ENCODE measurements at regions of chr20 and their contacts with region 1.

Region 1: DNA sequence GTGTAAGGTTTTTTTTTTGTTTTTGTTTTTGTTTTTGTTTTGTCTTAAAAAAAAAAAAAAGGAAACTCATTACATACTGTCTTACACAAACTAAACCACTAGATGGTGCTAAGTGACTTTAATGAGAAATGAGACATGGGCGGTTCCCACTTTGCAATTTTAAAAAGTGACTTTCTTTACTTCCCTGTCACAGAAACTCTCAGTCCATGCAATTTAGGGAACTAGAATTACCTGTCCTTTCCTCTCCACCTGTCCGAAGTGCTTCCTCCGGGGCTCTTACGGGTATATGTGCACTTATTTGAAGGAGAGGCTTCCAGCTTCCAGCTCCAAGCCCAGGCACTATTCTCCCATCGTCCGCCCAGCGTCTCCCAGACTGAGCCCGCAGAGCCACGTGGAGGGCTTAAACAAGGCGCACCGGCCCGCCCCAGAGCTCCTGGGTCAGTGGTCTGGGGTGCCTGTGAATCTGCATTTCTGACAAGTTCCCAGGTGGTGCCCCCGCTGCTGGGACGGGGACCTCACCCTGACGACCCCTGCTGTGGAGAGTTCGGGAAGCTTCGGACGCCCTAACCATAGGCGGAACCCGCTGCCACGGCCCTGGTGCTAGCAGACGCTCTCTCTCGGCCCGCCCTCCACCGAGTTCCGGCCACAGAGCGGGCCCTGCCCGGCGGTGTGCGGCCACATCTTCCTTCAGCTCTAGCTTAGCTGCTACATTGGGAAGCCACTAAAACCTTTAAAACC is 26.1 kb downstream of the BFSP1 start:
- DNase-seq: peak; percentile 67
- H3K4me3 Mint-ChIP-seq: peak overlapping the region; percentile 83
- H3K27ac Mint-ChIP-seq: peak overlapping the region; percentile 88
- H3K4me1 Mint-ChIP-seq: peaks cover 42% of the 10 kb centered on the region
- H3K27me3 Mint-ChIP-seq: peaks cover 10% of the 10 kb centered on the region

Region 2: GRCh38 chr20:17536944-17537444 is 31.9 kb after region 1 on chr20:
- intact Hi-C with region 1: loop called (anchors 1 kb)
- DNase-seq: peak; percentile 61
- H3K4me3 Mint-ChIP-seq: no peak overlapping the region
- H3K27ac Mint-ChIP-seq: no peak overlapping the region
- H3K4me1 Mint-ChIP-seq: peaks cover 26% of the 10 kb centered on the region
- H3K27me3 Mint-ChIP-seq: peaks cover 22% of the 10 kb centered on the region

Region 3: GRCh38 chr20:17617551-17618223 is 112.6 kb after region 1 on chr20:
- intact Hi-C with region 1: loop called (anchors 2 kb)
- DNase-seq: no peak
- H3K4me3 Mint-ChIP-seq: no peak overlapping the region
- H3K27ac Mint-ChIP-seq: no peak overlapping the region
- H3K4me1 Mint-ChIP-seq: no peaks in the 10 kb centered on the region
- H3K27me3 Mint-ChIP-seq: no peaks in the 10 kb centered on the region

Region 4: GRCh38 chr20:17682103-17682888 is 177.2 kb after region 1 on chr20 and contains the start of gene RRBP1:
- intact Hi-C with region 1: loop called (anchors 5 kb)
- DNase-seq: peak; percentile 96
- H3K4me3 Mint-ChIP-seq: peak within 1 kb of the TSS; percentile 84
- H3K27ac Mint-ChIP-seq: peak within 1 kb of the TSS; percentile 84
- H3K4me1 Mint-ChIP-seq: peaks cover 30% of the 10 kb centered on the region
- H3K27me3 Mint-ChIP-seq: peaks cover 30% of the 10 kb centered on the region
- total RNA-seq, gene RRBP1: 73.1 and 73.6 TPM in 2 replicates

Region 5: GRCh38 chr20:17721802-17722486 is 216.9 kb after region 1 on chr20:
- intact Hi-C with region 1: no loop called
- DNase-seq: no peak
- H3K4me3 Mint-ChIP-seq: no peak overlapping the region
- H3K27ac Mint-ChIP-seq: no peak overlapping the region
- H3K4me1 Mint-ChIP-seq: no peaks in the 10 kb centered on the region
- H3K27me3 Mint-ChIP-seq: peaks cover 2% of the 10 kb centered on the region

Region 6: DNA sequence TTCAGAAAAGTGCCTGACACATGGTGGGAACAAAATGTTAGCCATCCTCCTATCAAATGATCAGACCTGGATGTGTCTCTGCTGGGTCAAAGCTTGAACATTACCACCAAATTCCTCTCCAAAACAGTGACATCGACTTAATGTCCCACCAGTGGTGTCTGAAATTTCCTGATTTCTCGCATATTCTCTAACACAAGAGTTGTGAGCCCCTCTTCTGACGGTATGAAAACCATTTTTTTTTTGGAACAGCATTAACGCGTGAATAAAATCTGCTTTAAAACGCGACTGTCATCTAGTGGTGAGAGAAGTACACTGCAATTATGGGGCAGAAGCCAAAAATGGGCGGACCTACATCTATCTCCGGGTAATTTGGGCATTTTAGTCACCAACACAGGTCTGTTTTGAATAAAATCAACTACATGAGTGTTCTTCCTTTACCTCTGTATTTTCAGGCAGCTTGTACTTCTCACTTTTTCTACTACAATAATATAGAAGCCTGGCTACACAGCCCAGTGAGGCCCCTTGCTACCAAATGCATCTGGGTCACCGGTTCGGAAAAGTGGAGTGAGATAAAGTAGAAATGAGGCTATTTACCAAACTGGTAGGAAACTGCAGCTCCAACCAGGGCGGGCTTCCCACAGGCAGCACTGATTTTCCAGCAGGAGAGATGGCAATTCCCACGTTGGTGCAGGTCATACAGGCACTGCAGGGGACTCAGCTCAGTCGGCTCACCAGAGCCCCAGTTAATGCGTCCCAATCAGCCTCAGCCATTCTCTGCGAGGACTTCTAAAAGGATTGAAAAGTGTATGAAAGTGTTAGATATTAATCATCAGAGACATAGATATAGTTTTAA is 491.1 kb after region 1 on chr20:
- intact Hi-C with region 1: loop called (anchors 1 kb)
- DNase-seq: peak; percentile 39
- H3K4me3 Mint-ChIP-seq: no peak overlapping the region
- H3K27ac Mint-ChIP-seq: peak overlapping the region; percentile 44
- H3K4me1 Mint-ChIP-seq: peaks cover 39% of the 10 kb centered on the region
- H3K27me3 Mint-ChIP-seq: no peaks in the 10 kb centered on the region

Region 7: GRCh38 chr20:18276821-18277220 is 771.8 kb after region 1 on chr20:
- intact Hi-C with region 1: loop called (anchors 2 kb)
- DNase-seq: peak; percentile 57
- H3K4me3 Mint-ChIP-seq: no peak overlapping the region
- H3K27ac Mint-ChIP-seq: no peak overlapping the region
- H3K4me1 Mint-ChIP-seq: peaks cover 7% of the 10 kb centered on the region
- H3K27me3 Mint-ChIP-seq: peaks cover 38% of the 10 kb centered on the region

Measured in activated T-helper 2 cell treated with anti-CD3 and anti-CD28 coated beads, Interferon-gamma antibody, Interleukin-2, Interleukin-4, amounts not matched to agents 10 μg/mL and 5 μg/mL and 100 μg/mL, durations not matched to agents 14 hours and 24 hours and 36 hours (primary cell).